Activated naive CD4-positive, alpha-beta T cell treated with anti-CD3 and anti-CD28 coated beads for 36 hours (primary cell): ENCODE measurements at regions of chr12 and their contacts with region 1.

Region 1: DNA sequence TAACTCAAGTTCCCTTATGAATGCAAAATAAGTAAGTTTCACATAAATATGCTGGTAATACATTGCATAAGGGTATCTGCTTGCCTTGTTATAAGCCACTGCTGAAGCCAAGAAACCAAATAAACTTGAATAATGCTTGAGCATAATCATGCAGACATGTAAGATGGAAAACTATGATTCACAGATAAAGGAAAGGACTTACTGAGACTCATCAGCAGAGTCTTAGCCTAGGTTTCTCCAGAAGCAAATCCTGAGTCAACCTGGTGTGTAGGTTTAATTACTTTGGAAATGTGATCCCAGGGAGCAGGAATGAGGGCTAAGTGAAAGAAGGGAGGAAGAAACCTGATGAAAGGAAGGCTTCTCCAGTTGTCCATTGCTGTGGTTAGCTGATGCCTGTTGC is 107.7 kb upstream of the BTG1 start:
- DNase-seq: no peak
- H3K4me3 Mint-ChIP-seq: no peak overlapping the region
- H3K27ac Mint-ChIP-seq: no peak overlapping the region
- H3K4me1 Mint-ChIP-seq: peaks cover 21% of the 10 kb centered on the region
- H3K27me3 Mint-ChIP-seq: no peaks in the 10 kb centered on the region

Region 2: DNA sequence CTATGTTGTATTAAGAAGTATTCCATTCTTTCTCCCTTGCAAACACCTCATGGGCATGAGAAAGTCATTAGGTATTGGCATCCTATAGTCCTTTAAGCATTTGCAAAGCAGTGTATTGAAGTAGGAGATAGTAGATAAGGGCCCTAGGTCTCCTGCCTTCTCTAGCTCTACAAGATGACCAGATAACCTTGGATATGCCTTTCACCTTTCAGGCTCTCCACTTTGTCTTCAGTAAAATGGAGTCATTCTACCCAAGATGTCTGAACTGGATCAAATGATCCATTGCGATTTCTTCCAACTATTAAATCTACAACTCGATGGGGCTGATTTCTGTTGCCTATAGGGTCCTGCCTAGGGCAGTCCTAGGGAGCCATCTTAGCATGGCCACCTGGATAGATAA is 24.5 kb after region 1 on chr12:
- CTCF ChIA-PET with region 1: interaction called, 3 read pairs
- intact Hi-C with region 1: loop called (anchors 1 kb)
- DNase-seq: no peak
- H3K4me3 Mint-ChIP-seq: no peak overlapping the region
- H3K27ac Mint-ChIP-seq: peak overlapping the region; percentile 70
- H3K4me1 Mint-ChIP-seq: peaks cover 18% of the 10 kb centered on the region
- H3K27me3 Mint-ChIP-seq: no peaks in the 10 kb centered on the region

Region 3: DNA sequence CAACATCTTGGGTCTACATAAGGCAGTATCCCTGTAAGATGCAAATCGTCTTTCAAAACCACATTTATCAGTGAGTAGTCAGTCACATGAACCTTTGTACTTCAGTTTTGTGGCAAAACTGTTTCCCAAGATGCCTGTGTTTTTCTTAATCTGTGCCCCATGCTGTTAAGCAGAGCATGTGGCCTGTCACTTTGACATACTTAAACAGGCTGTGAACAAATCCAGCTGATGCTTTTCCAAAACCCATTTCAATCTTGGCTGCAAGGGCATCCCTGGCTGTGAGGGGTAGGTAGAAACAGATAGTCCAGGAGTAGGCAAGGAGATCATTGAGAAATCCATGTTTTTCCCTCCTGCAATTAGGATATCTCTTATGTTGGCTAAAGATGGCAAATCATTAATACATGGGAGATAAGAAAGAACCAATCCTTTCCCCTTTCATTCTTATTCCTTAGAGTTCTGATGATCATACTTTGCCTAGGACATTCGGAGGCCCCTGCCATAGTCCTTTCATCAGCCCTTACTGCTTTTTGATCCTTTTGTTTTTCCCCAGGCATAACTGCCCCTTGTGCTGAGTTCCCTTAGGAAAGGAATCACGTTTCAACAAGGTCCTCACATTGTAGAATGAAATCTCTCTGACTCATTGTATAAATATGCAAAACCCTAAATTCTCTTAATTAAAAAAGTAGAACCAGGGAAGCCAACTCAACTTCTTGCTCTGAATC is 796.9 kb after region 1 on chr12:
- CTCF ChIA-PET with region 1: no interaction called
- intact Hi-C with region 1: no loop called
- DNase-seq: no peak
- H3K4me3 Mint-ChIP-seq: no peak overlapping the region
- H3K27ac Mint-ChIP-seq: no peak overlapping the region
- H3K4me1 Mint-ChIP-seq: no peaks in the 10 kb centered on the region
- H3K27me3 Mint-ChIP-seq: peaks cover 2% of the 10 kb centered on the region